ENCODE measurements at regions of chr1 and their contacts with region 1.

Region 1: DNA sequence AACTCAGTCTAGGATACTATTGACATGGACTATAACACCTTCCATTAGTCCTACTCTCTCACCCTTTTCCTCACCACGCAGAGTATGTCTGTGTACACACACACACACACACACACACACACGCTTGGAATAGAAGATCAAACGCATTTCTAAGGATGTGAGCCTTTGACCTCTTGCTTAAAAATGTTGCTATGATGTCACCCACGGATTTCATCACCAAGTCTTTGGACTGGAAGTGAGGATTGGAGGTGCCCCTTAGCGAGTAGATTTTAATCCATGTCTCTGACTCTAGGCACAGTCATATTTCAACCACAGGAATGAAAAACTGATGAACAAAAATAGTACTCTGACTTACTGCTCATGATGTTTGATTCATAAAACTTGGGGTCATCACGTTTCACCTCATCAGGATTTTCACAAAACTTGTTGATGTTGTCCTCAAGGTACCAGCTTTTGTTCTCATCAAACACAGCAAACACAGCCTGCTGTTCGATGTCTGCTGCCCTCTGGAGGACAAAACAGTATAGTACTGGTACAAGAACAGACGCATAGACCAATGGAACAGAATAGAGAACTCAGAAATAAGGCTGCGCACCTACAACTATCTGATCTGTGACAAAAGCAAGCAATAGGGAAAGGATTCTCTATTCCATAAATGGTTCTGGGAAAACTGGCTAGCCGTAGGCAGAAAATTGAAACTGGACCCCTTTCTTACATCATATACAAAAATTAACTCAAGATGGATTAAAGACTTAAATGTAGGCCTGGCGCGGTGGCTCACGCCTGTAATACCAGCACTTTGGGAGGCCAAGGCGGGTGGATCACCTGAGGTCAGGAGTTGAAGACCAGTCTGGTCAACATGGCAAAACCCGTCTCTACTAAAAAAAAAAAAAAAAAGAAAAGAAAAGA is 39.9 kb downstream of the F5 start:
- DNase-seq: peak in 32 of 35 experiments; percentile 13 to 86 (median 39)
- ATAC-seq: peak in 3 of 4 experiments; percentile 83 to 85 (median 83)
- H3K4me3 ChIP-seq: no peak overlapping the region
- H3K4me3 Mint-ChIP-seq: no peak overlapping the region
- H3K27ac ChIP-seq: no peak overlapping the region
- H3K27ac Mint-ChIP-seq: peak overlapping the region in 1 of 2 donors; percentile 8
- H3K4me1 ChIP-seq: no peaks in the 10 kb centered on the region
- H3K4me1 Mint-ChIP-seq: peaks cover 0 to 5% (median 0%) of the 10 kb centered on the region in 3 donors
- H3K27me3 ChIP-seq: no peaks in the 10 kb centered on the region
- H3K27me3 Mint-ChIP-seq: no peaks in the 10 kb centered on the region

Region 2: GRCh38 chr1:168603501-168604110 is 942.7 kb before region 1 on chr1:
- CTCF ChIA-PET with region 1: interaction called, 8 to 10 read pairs
- POLR2A ChIA-PET with region 1: no interaction called
- DNase-seq: peak; percentile 27 to 79 (median 62)
- ATAC-seq: peak; percentile 66 to 87 (median 77)
- H3K4me3 ChIP-seq: no peak overlapping the region
- H3K4me3 Mint-ChIP-seq: no peak overlapping the region
- H3K27ac ChIP-seq: no peak overlapping the region
- H3K27ac Mint-ChIP-seq: no peak overlapping the region
- H3K4me1 ChIP-seq: no peaks in the 10 kb centered on the region
- H3K4me1 Mint-ChIP-seq: no peaks in the 10 kb centered on the region
- H3K27me3 ChIP-seq: no peaks in the 10 kb centered on the region
- H3K27me3 Mint-ChIP-seq: peaks cover 1 to 4% of the 10 kb centered on the region in 2 donors

Region 3: GRCh38 chr1:169201084-169201619 is 345.2 kb before region 1 on chr1:
- CTCF ChIA-PET with region 1: no interaction called
- POLR2A ChIA-PET with region 1: no interaction called
- DNase-seq: no peak
- ATAC-seq: no peak
- H3K4me3 ChIP-seq: no peak overlapping the region
- H3K4me3 Mint-ChIP-seq: no peak overlapping the region
- H3K27ac ChIP-seq: no peak overlapping the region
- H3K27ac Mint-ChIP-seq: no peak overlapping the region
- H3K4me1 ChIP-seq: no peaks in the 10 kb centered on the region
- H3K4me1 Mint-ChIP-seq: no peaks in the 10 kb centered on the region
- H3K27me3 ChIP-seq: no peaks in the 10 kb centered on the region
- H3K27me3 Mint-ChIP-seq: no peaks in the 10 kb centered on the region

Region 4: GRCh38 chr1:169491845-169492281 is 54.5 kb before region 1 on chr1:
- CTCF ChIA-PET with region 1: no interaction called
- POLR2A ChIA-PET with region 1: no interaction called
- DNase-seq: no peak
- ATAC-seq: no peak
- H3K4me3 ChIP-seq: no peak overlapping the region
- H3K4me3 Mint-ChIP-seq: no peak overlapping the region
- H3K27ac ChIP-seq: no peak overlapping the region
- H3K27ac Mint-ChIP-seq: no peak overlapping the region
- H3K4me1 ChIP-seq: no peaks in the 10 kb centered on the region
- H3K4me1 Mint-ChIP-seq: peaks cover 1 to 8% (median 4%) of the 10 kb centered on the region in 3 donors
- H3K27me3 ChIP-seq: peaks cover 0 to 5% of the 10 kb centered on the region in 2 experiments
- H3K27me3 Mint-ChIP-seq: peaks cover 0 to 6% of the 10 kb centered on the region in 2 donors

Region 5: DNA sequence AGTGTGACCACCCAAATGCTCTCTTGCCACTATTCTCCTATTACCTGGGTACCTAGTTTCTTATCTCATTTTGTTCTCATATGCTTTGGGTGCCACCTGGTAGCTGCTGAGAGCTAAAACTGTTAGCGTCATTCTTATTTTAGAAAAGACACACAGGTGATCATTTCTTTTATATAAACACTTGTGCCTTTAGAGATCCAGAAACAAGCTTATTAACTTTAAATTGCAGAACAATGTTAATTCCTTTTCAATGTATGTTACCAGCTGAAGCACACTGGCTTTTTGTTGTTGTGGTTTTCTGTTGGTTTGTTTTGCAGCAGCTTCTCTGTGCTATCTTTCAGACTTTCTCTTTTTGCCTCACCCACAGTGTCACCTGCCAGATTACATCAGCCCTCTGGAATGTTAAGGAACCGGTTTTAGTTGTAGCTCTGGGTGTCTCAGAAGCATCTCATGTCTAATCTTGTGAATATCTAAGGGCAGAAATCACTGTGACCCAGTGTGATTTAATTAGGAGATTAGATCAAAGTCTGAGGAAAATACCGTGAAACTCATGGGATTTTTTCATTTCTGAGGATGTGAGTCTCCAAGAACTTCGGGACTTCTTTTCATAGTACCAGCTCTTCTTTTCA is 17.2 kb before region 1 on chr1:
- CTCF ChIA-PET with region 1: no interaction called
- POLR2A ChIA-PET with region 1: no interaction called
- DNase-seq: no peak
- ATAC-seq: no peak
- H3K4me3 ChIP-seq: no peak overlapping the region
- H3K4me3 Mint-ChIP-seq: peak overlapping the region in 1 of 3 donors; percentile 5
- H3K27ac ChIP-seq: no peak overlapping the region
- H3K27ac Mint-ChIP-seq: no peak overlapping the region
- H3K4me1 ChIP-seq: peaks cover 0 to 2% of the 10 kb centered on the region in 2 experiments
- H3K4me1 Mint-ChIP-seq: peaks cover 5 to 14% (median 8%) of the 10 kb centered on the region in 3 donors
- H3K27me3 ChIP-seq: no peaks in the 10 kb centered on the region
- H3K27me3 Mint-ChIP-seq: peaks cover 0 to 2% of the 10 kb centered on the region in 2 donors

Region 6: GRCh38 chr1:169557131-169557530 is 10.8 kb after region 1 on chr1:
- CTCF ChIA-PET with region 1: interaction called, 7 to 11 read pairs
- POLR2A ChIA-PET with region 1: no interaction called
- DNase-seq: no peak
- ATAC-seq: no peak
- H3K4me3 ChIP-seq: no peak overlapping the region
- H3K4me3 Mint-ChIP-seq: no peak overlapping the region
- H3K27ac ChIP-seq: no peak overlapping the region
- H3K27ac Mint-ChIP-seq: peak overlapping the region in 1 of 2 donors; percentile 29
- H3K4me1 ChIP-seq: no peaks in the 10 kb centered on the region
- H3K4me1 Mint-ChIP-seq: peaks cover 0 to 2% (median 0%) of the 10 kb centered on the region in 3 donors
- H3K27me3 ChIP-seq: no peaks in the 10 kb centered on the region
- H3K27me3 Mint-ChIP-seq: no peaks in the 10 kb centered on the region

Region 7: GRCh38 chr1:169586395-169587255 is 40.3 kb after region 1 on chr1 and contains the start of gene F5:
- CTCF ChIA-PET with region 1: interaction called, 4 to 10 read pairs
- POLR2A ChIA-PET with region 1: no interaction called
- DNase-seq: peak; percentile 46 to 82 (median 71)
- ATAC-seq: peak; percentile 98 to 100 (median 98)
- H3K4me3 ChIP-seq: peak within 1 kb of the TSS; percentile 25 to 52
- H3K4me3 Mint-ChIP-seq: peak within 1 kb of the TSS; percentile 84 to 87 (median 87)
- H3K27ac ChIP-seq: no peak within 1 kb of the TSS
- H3K27ac Mint-ChIP-seq: peak within 1 kb of the TSS; percentile 79 to 88
- H3K4me1 ChIP-seq: peaks cover 17 to 20% of the 10 kb centered on the region in 2 experiments
- H3K4me1 Mint-ChIP-seq: peaks cover 27 to 56% (median 42%) of the 10 kb centered on the region in 3 donors
- H3K27me3 ChIP-seq: peaks cover 0 to 11% of the 10 kb centered on the region in 2 experiments
- H3K27me3 Mint-ChIP-seq: peaks cover 0 to 8% of the 10 kb centered on the region in 2 donors
- total RNA-seq, gene F5: 4.2 to 9.7 (median 8.5) TPM

Region 8: GRCh38 chr1:169711469-169712281 is 165.3 kb after region 1 on chr1 and contains the start of gene SELL:
- CTCF ChIA-PET with region 1: interaction called, 15 to 35 read pairs
- POLR2A ChIA-PET with region 1: no interaction called
- DNase-seq: peak; percentile 43 to 89 (median 73)
- ATAC-seq: peak; percentile 76 to 81 (median 78)
- H3K4me3 ChIP-seq: peak within 1 kb of the TSS; percentile 59 to 76
- H3K4me3 Mint-ChIP-seq: peak within 1 kb of the TSS; percentile 88 to 98 (median 91)
- H3K27ac ChIP-seq: peak within 1 kb of the TSS; percentile 50
- H3K27ac Mint-ChIP-seq: peak within 1 kb of the TSS; percentile 99 to 100
- H3K4me1 ChIP-seq: peaks cover 4 to 16% of the 10 kb centered on the region in 2 experiments
- H3K4me1 Mint-ChIP-seq: peaks cover 19 to 35% (median 29%) of the 10 kb centered on the region in 3 donors
- H3K27me3 ChIP-seq: no peaks in the 10 kb centered on the region
- H3K27me3 Mint-ChIP-seq: peaks cover 3% of the 10 kb centered on the region in 2 donors
- total RNA-seq, gene SELL: 305 to 461 (median 336) TPM

Region 9: GRCh38 chr1:169794530-169795416 is 248.4 kb after region 1 on chr1 and contains the start of gene METTL18:
- CTCF ChIA-PET with region 1: interaction called, 3 to 10 read pairs
- POLR2A ChIA-PET with region 1: interaction called in 1 of 2 experiments, 3 read pairs
- DNase-seq: peak; percentile 77 to 94 (median 90)
- ATAC-seq: peak; percentile 98 to 99 (median 98)
- H3K4me3 ChIP-seq: peak within 1 kb of the TSS; percentile 83 to 98
- H3K4me3 Mint-ChIP-seq: peak within 1 kb of the TSS; percentile 94 to 100 (median 95)
- H3K27ac ChIP-seq: peak within 1 kb of the TSS; percentile 74
- H3K27ac Mint-ChIP-seq: peak within 1 kb of the TSS; percentile 96 to 99
- H3K4me1 ChIP-seq: peaks cover 13 to 20% of the 10 kb centered on the region in 2 experiments
- H3K4me1 Mint-ChIP-seq: peaks cover 49 to 56% (median 54%) of the 10 kb centered on the region in 3 donors
- H3K27me3 ChIP-seq: no peaks in the 10 kb centered on the region
- H3K27me3 Mint-ChIP-seq: no peaks in the 10 kb centered on the region
- total RNA-seq, gene METTL18: 3.9 to 16.5 (median 11.1) TPM

Region 10: GRCh38 chr1:169809370-169810095 is 263.2 kb after region 1 on chr1:
- CTCF ChIA-PET with region 1: interaction called, 6 to 11 read pairs
- POLR2A ChIA-PET with region 1: no interaction called
- DNase-seq: peak in 11 of 35 experiments; percentile 3 to 65 (median 7)
- ATAC-seq: no peak
- H3K4me3 ChIP-seq: no peak overlapping the region
- H3K4me3 Mint-ChIP-seq: no peak overlapping the region
- H3K27ac ChIP-seq: no peak overlapping the region
- H3K27ac Mint-ChIP-seq: no peak overlapping the region
- H3K4me1 ChIP-seq: no peaks in the 10 kb centered on the region
- H3K4me1 Mint-ChIP-seq: peaks cover 0 to 2% (median 0%) of the 10 kb centered on the region in 3 donors
- H3K27me3 ChIP-seq: no peaks in the 10 kb centered on the region
- H3K27me3 Mint-ChIP-seq: no peaks in the 10 kb centered on the region